PC-9 (cell line): ENCODE measurements at regions of chr1 and their contacts with region 1.

Region 1: DNA sequence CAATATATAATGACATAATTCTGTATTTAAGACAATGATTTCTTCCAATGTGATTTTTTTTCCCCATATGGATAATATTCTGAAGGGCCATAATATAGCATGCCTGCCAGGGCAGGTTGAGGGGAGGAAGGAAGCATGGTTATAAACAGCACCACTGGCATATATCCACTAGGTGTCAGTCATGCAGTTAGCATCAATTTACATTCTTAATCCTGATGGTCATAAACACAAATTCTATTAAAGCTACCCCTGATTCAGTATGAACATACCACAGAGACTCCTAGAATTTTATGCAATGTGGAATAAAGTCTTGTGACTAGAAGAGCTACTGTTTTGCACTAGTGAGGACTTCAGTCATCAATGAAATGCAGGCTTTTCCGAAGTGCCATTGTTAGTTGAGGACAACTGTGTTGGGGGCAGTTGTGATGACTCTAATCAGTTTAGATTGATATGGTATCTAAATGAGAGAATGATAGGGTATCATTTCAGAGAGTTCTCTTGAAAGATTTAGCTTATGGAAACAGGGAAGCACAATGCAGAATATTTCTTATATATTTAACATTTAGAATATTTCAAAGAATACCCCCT is 342.7 kb upstream of the NR5A2 start:
- DNase-seq: peak; percentile 34 to 70
- H3K4me3 ChIP-seq: no peak overlapping the region
- H3K27ac ChIP-seq: peak overlapping the region; percentile 64
- H3K4me1 ChIP-seq: peaks cover 36% of the 10 kb centered on the region
- H3K27me3 ChIP-seq: no peaks in the 10 kb centered on the region
- CTCF ChIP-seq: peak; percentile 88

Region 2: DNA sequence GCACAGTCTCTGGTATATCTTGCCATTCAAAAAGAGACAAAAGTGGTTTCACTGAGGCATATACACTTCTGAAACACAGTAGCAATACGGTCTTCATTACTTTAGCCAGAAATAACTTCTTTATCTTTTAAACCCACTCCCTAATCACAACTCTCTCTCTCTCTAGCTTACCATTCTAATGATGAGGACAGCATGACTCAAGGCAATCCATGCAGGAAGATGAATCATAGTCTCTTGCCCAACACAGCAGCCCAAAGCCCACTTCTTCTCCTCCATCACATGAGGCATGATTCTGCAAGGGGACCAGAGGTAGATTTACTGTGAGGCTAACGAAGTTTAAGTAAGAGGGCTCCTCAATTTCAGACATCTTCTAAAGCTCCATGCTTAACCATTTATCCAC is 57.8 kb after region 1 on chr1:
- CTCF ChIA-PET with region 1: no interaction called
- POLR2A ChIA-PET with region 1: no interaction called
- intact Hi-C with region 1: loop called (anchors 5 kb)
- DNase-seq: peak; percentile 30 to 70
- H3K4me3 ChIP-seq: no peak overlapping the region
- H3K27ac ChIP-seq: peak overlapping the region; percentile 71
- H3K4me1 ChIP-seq: peaks cover 15% of the 10 kb centered on the region
- H3K27me3 ChIP-seq: no peaks in the 10 kb centered on the region
- CTCF ChIP-seq: no peak

Region 3: GRCh38 chr1:199909135-199909534 is 224.4 kb after region 1 on chr1:
- CTCF ChIA-PET with region 1: interaction called, 3 read pairs
- POLR2A ChIA-PET with region 1: no interaction called
- intact Hi-C with region 1: loop called (anchors 2 kb)
- DNase-seq: peak; percentile 38 to 85
- H3K4me3 ChIP-seq: no peak overlapping the region
- H3K27ac ChIP-seq: no peak overlapping the region
- H3K4me1 ChIP-seq: peaks cover 8% of the 10 kb centered on the region; the same call in 1 of the 2 replicates
- H3K27me3 ChIP-seq: no peaks in the 10 kb centered on the region
- CTCF ChIP-seq: no peak

Region 4: DNA sequence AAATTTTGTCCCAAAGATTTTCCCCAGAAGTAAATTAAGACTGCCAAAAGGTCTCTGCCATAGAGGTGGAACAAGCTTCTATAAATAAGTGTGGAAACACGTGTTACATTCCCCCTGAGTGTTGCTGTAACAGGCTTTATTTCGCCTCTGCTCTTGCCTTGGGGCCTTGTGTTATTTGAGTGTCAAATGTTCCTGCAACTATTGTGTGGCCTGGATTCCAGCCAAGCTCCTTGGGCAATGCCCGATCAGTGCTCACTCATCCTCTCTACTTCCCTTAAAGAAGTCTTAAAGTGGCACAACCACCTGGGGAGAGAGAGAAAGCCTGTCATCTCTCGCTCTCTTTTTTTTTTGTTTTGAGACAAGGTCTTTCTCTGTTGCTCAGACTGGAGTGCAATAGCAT is 499.4 kb after region 1 on chr1:
- CTCF ChIA-PET with region 1: no interaction called
- POLR2A ChIA-PET with region 1: no interaction called
- intact Hi-C with region 1: loop called (anchors 10 kb)
- DNase-seq: peak; percentile 90 to 96
- H3K4me3 ChIP-seq: no peak overlapping the region
- H3K27ac ChIP-seq: peak overlapping the region; percentile 42
- H3K4me1 ChIP-seq: peaks cover 47% of the 10 kb centered on the region
- H3K27me3 ChIP-seq: no peaks in the 10 kb centered on the region
- CTCF ChIP-seq: no peak

Region 5: DNA sequence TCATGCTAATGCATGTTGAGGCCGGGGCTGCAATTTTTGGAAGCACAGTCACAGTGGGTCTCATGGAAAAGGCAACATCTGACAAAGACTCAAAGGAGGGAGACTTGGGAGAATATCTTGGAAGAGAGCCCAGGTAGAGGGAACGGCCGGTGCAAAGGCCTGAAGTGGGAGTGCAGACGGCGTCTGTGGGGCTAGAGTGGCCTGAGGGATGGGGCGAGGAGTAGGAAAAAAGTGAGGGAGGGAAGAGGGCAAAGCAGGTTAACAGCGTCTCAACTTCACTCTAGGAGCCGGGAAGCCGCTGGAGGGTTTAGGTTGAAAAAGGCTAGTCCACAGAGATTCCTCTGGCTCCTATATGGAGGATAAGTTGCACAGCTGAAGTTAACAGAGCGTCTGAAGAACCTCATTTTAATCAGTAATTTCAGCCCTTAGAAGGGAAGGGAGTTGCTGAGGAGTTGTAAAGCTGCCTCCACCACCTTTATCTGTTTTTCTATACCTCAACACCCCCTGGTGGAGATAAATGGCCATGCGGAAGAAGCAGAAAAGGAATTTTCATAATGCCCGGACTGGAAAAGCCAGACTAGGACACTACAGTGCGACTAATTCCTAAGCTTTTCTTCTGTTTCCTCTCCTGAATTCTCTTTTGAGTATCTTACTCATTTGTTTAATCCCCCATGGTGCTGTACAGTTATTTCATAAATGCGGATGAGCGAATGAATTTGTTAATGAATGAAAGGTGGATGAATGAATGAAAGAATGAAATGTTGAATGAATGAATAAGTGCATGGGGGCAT is 803.8 kb after region 1 on chr1:
- CTCF ChIA-PET with region 1: no interaction called
- POLR2A ChIA-PET with region 1: no interaction called
- intact Hi-C with region 1: loop called (anchors 2 kb)
- DNase-seq: peak; percentile 63 to 68
- H3K4me3 ChIP-seq: no peak overlapping the region
- H3K27ac ChIP-seq: no peak overlapping the region
- H3K4me1 ChIP-seq: peaks cover 24% of the 10 kb centered on the region
- H3K27me3 ChIP-seq: no peaks in the 10 kb centered on the region
- CTCF ChIP-seq: peak; percentile 89